ENCODE measurements at regions of chr7 and their contacts with region 1.

Region 1: DNA sequence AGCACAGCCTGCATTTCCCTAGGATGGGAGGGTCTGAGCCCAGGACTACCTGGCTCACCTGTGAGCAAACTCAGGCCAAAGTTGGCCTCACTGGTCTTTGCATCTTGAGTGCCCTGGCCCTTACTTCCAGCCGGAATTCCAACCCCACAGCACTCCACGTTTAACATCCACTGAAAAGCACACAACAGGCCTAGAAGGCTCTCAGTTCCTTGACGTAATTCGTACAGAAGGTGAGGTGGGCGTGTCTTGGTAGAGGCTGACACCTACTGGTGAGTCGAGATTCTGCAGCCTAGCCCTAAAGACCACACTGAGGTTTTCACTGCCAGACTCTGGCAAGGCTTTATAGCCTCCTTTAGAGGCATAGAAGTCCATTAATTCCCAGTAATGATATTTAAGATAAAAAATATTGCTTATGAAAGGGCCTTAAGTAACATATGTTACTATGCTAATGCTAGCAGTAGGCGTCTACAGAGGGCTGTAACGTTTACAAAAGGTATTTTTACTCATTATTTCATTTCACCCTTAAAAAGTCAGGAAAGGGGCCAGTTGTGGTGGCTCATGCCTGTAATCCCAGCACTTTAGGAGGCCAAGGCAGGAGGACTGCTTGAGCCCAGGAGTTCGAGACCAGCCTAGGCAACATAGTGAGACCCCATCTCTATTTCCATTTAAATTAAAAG is 95.8 kb downstream of the HIP1 start:
- DNase-seq: no peak
- ATAC-seq: peak in 1 of 2 donors; percentile 65
- H3K4me3 ChIP-seq: no peak overlapping the region
- H3K27ac ChIP-seq: no peak overlapping the region
- H3K4me1 ChIP-seq: peaks cover 10 to 18% of the 10 kb centered on the region in 2 donors
- H3K27me3 ChIP-seq: no peaks in the 10 kb centered on the region
- CTCF ChIP-seq: peak; percentile 63 to 77 (median 66)
- POLR2A ChIP-seq: no peak

Region 2: GRCh38 chr7:75534727-75535307 is 108.1 kb before region 1 on chr7:
- in situ Hi-C with region 1: no loop called
- intact Hi-C with region 1: loop called (anchors 5 kb)
- DNase-seq: no peak
- ATAC-seq: no peak
- H3K4me3 ChIP-seq: no peak overlapping the region
- H3K27ac ChIP-seq: no peak overlapping the region
- H3K4me1 ChIP-seq: peaks cover 6 to 7% of the 10 kb centered on the region in 2 donors
- H3K27me3 ChIP-seq: no peaks in the 10 kb centered on the region
- CTCF ChIP-seq: no peak
- POLR2A ChIP-seq: no peak